Activated CD4-positive, alpha-beta T cell treated with anti-CD3 and anti-CD28 coated beads for 36 hours (primary cell): ENCODE measurements at regions of chr17 and their contacts with region 1.

Region 1: GRCh38 chr17:32936894-32937500 is 9.0 kb downstream of the TMEM98 start:
- DNase-seq: peak; percentile 84
- ATAC-seq: peak; percentile 90
- H3K4me3 Mint-ChIP-seq: no peak overlapping the region
- H3K27ac Mint-ChIP-seq: no peak overlapping the region
- H3K4me1 Mint-ChIP-seq: peaks cover 2% of the 10 kb centered on the region
- H3K27me3 Mint-ChIP-seq: peaks cover 20% of the 10 kb centered on the region

Region 2: GRCh38 chr17:32783602-32784001 is 153.4 kb before region 1 on chr17:
- CTCF ChIA-PET with region 1: interaction called, 33 read pairs
- POLR2A ChIA-PET with region 1: no interaction called
- intact Hi-C with region 1: loop called (anchors 1 kb)
- DNase-seq: no peak
- ATAC-seq: peak; percentile 51
- H3K4me3 Mint-ChIP-seq: no peak overlapping the region
- H3K27ac Mint-ChIP-seq: no peak overlapping the region
- H3K4me1 Mint-ChIP-seq: no peaks in the 10 kb centered on the region
- H3K27me3 Mint-ChIP-seq: no peaks in the 10 kb centered on the region

Region 3: DNA sequence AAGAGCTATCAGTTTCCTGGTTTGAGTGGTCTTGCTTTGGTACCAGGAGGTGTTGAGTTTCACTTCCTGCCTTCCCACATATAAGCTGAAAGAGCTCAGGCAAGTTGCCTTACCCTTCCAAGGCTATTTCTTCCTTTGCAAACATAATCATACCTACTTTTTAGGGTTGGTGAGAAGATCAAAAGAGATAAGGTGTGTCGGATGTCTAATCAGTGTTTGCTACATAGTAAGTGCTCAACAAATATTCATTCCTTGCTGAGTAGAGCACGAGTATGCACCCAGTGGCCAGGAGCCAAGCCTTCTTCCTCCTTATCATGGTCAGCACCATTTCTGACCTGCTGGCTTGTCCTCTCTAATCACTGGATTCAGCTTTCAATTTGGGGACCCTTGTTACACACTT is 21.8 kb before region 1 on chr17:
- CTCF ChIA-PET with region 1: interaction called, 10 read pairs
- POLR2A ChIA-PET with region 1: no interaction called
- intact Hi-C with region 1: no loop called
- DNase-seq: no peak
- ATAC-seq: no peak
- H3K4me3 Mint-ChIP-seq: no peak overlapping the region
- H3K27ac Mint-ChIP-seq: no peak overlapping the region
- H3K4me1 Mint-ChIP-seq: peaks cover 17% of the 10 kb centered on the region
- H3K27me3 Mint-ChIP-seq: peaks cover 8% of the 10 kb centered on the region

Region 4: GRCh38 chr17:32954477-32954876 is 17.5 kb after region 1 on chr17:
- CTCF ChIA-PET with region 1: interaction called, 14 read pairs
- POLR2A ChIA-PET with region 1: no interaction called
- intact Hi-C with region 1: no loop called
- DNase-seq: no peak
- ATAC-seq: no peak
- H3K4me3 Mint-ChIP-seq: no peak overlapping the region
- H3K27ac Mint-ChIP-seq: no peak overlapping the region
- H3K4me1 Mint-ChIP-seq: no peaks in the 10 kb centered on the region
- H3K27me3 Mint-ChIP-seq: peaks cover 16% of the 10 kb centered on the region

Region 5: GRCh38 chr17:32997753-32998632 is 61.0 kb after region 1 on chr17:
- CTCF ChIA-PET with region 1: interaction called, 5 read pairs
- POLR2A ChIA-PET with region 1: no interaction called
- intact Hi-C with region 1: loop called in 1 of 2 experiments (anchors 5 kb)
- DNase-seq: peak; percentile 86
- ATAC-seq: peak; percentile 68
- H3K4me3 Mint-ChIP-seq: no peak overlapping the region
- H3K27ac Mint-ChIP-seq: no peak overlapping the region
- H3K4me1 Mint-ChIP-seq: peaks cover 4% of the 10 kb centered on the region
- H3K27me3 Mint-ChIP-seq: peaks cover 11% of the 10 kb centered on the region

Region 6: DNA sequence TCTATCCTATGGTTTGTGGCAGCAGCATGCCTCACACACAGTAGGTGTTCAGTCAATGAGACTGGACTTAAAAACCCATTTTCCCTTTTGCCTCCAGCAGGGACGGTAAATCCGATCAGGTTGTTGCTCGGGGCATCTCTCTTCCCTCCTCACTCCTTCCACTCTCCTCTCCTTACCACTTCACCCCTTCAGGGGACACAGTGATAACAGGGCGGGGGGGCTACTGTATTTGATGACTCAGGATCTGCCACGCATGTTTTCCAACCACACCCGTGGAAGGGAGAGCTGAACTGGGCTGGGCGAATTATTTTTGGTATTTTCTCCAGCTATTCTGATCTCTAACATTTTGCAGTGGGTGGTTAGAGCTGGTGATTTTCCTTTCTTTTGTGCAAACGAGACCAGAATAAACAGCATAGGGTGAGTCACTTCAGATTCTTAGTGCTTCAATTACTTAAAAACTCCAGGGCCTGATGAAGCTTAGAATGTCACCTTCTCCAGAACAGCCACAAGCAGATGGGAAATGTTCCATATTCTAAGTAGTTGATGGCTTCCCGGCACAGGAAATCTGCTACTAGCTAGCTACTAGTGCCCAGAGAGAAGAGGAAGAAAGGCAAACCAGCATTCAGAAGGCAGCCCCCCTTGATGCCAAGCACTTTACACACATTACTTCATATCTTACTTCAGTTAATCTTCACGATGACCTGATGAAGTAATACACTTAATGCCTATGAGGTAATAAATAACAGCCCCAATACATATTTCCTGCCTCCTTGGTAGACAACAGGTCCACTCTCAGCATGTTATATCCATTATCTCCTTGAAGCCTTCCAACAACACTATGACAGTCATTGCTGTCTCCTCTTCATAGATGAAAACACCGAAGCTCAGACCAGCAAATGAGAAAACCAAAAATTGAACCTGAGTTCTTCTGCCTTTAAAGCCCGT is 281.9 kb after region 1 on chr17:
- CTCF ChIA-PET with region 1: no interaction called
- POLR2A ChIA-PET with region 1: no interaction called
- intact Hi-C with region 1: no loop called
- DNase-seq: no peak
- ATAC-seq: no peak
- H3K4me3 Mint-ChIP-seq: no peak overlapping the region
- H3K27ac Mint-ChIP-seq: no peak overlapping the region
- H3K4me1 Mint-ChIP-seq: no peaks in the 10 kb centered on the region
- H3K27me3 Mint-ChIP-seq: peaks cover 16% of the 10 kb centered on the region

Region 7: GRCh38 chr17:33318241-33318640 is 381.2 kb after region 1 on chr17:
- CTCF ChIA-PET with region 1: no interaction called
- POLR2A ChIA-PET with region 1: no interaction called
- intact Hi-C with region 1: loop called in 1 of 2 experiments (anchors 10 kb)
- DNase-seq: no peak
- ATAC-seq: no peak
- H3K4me3 Mint-ChIP-seq: no peak overlapping the region
- H3K27ac Mint-ChIP-seq: no peak overlapping the region
- H3K4me1 Mint-ChIP-seq: peaks cover 6% of the 10 kb centered on the region
- H3K27me3 Mint-ChIP-seq: peaks cover 11% of the 10 kb centered on the region